PC-3 (cell line): ENCODE measurements at regions of chr11 and their contacts with region 1.

Region 1: DNA sequence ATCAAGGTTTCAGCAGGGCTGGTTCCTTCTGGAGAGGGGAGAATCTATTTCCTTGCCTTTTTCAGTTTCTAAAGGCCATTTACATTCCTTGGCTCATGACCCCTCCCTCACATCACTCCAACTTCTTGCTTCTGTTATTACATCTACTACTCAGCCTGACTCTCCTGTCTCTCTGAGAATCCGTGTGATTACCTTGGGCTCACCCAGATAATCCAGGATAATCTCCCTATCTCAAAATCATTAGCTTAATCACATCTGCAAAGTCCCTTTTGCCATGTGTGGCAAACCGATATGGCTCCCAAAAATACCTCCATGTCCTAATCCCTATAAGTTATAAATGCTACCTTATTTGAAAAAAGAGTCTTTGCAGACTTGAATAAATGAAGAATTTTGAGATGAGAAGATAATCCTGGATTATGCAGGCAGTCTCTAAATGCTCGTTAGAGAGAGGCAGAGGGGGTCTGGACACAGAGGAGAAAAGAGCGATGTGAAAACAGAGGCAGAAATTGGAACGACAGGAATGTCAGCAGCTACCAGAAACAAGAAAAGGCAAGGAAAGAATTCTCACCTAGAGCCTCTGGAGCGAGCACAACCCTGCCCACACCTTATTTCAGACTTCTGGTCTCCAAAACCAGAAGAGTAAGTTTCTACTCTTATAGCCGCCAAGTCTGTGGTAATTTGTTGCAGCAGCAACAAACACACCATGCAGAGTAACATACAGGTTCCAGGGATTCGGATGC is 23.6 kb upstream of the ARHGAP32 start:
- DNase-seq: no peak
- ATAC-seq: no peak
- H3K4me3 ChIP-seq: no peak overlapping the region
- H3K27ac ChIP-seq: no peak overlapping the region
- H3K4me1 ChIP-seq: no peaks in the 10 kb centered on the region
- H3K27me3 ChIP-seq: no peaks in the 10 kb centered on the region
- CTCF ChIP-seq: no peak

Region 2: DNA sequence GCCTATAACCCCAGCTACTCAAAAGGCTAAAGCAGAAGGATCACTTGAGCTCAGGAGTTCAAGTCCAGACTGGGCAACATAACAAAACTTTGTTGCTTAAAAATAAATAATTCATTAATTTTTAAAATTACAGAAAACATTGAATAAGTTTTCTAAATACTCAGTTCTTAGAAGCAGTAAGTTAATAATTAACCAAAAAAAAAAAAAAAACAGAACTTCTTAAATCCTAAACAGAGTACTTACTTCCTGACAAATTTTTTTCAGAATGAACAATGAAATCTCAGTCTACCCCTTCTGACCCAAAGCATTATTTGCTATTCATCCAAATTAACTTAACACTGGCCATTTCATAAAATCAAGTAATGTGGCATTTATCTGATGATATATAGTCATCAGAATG is 41.8 kb after region 1 on chr11:
- CTCF ChIA-PET with region 1: no interaction called
- POLR2A ChIA-PET with region 1: no interaction called
- intact Hi-C with region 1: loop called (anchors 1 kb)
- DNase-seq: no peak
- ATAC-seq: no peak
- H3K4me3 ChIP-seq: no peak overlapping the region
- H3K27ac ChIP-seq: no peak overlapping the region
- H3K4me1 ChIP-seq: no peaks in the 10 kb centered on the region
- H3K27me3 ChIP-seq: no peaks in the 10 kb centered on the region
- CTCF ChIP-seq: no peak

Region 3: DNA sequence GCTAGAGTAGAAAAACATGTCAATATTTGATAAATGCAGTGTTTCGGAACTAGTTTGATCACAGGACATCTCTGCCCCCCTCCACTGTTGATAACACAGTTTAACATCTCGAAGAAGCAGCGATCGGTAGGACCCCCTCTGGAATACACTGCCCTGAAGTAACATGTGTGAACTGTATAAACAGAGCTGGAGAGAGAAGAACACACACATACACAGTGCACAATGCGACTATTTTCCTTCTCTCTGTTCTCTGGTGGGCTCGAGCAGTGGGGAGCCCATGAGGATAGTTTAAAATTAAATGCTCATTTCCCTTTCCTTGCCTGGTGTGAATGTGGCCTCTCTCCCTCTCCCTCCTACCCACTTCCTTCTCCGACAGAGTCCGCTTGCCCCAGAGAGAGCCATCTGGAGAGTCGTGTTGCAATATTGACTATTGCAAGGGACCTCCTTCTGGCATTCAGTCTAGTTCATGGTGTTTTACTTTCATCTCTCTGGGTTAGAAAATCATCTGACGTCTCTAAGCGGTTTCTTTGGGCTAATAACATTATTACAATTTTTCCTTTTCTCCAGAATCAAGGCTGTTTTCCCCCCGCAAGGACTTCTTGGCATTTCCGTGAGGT is 108.3 kb after region 1 on chr11:
- CTCF ChIA-PET with region 1: interaction called, 13 read pairs
- POLR2A ChIA-PET with region 1: no interaction called
- intact Hi-C with region 1: no loop called
- DNase-seq: no peak
- ATAC-seq: no peak
- H3K4me3 ChIP-seq: no peak overlapping the region
- H3K27ac ChIP-seq: peak overlapping the region; percentile 60
- H3K4me1 ChIP-seq: peaks cover 14% of the 10 kb centered on the region
- H3K27me3 ChIP-seq: no peaks in the 10 kb centered on the region
- CTCF ChIP-seq: no peak